Activated CD4-positive, alpha-beta T cell treated with anti-CD3 and anti-CD28 coated beads for 36 hours (primary cell): ENCODE measurements at regions of chr5 and their contacts with region 1.

Region 1: DNA sequence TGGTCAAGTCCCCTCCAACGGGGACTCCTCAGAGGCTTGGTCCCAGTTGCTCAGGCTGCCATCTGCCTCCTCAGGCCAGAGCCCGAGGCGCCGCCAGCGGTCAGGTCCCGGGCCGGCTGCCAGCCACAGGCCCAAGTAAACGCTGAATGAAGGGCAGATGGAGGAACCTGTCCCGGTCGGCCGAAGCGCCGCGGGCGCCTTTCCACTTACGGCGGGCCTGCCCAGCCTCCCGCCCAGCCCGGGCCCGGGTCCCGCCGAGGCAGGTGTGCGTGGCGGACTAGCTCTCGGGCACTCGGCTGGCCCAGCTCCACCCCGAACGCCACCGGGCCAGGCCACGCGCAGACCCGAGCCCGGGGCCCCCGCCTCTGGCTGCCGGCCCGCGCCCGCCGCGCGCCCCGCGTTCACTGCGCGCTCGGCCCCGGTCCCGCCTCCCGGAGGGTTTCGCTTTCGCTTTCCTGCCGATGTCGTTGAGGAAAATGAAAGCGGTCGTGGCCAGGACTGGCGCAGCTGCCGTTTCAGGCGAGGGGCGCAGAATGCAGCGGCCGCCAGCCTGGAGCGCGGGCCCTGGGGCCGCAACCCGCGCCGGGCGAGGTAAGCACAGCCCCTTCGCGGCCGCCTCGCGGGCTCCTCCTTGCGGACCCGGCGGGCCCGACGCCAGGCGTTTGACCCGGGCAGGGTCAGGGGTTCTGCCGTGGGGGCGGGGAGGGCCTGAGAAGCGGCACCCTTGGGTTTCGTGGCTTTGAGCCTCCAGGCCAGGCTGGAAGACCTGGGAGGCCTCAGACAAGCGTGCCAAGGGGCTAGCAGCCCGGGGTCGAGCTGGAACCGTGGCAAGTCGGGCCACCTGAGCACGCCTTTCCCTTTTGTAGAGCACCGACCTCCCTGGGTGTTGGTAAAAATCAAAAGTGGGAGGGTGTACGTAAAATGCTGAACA is 41.2 kb downstream of the SLC22A5 start:
- DNase-seq: peak; percentile 92
- ATAC-seq: peak; percentile 68
- H3K4me3 Mint-ChIP-seq: peak overlapping the region; percentile 83
- H3K27ac Mint-ChIP-seq: peak overlapping the region; percentile 98
- H3K4me1 Mint-ChIP-seq: peaks cover 71% of the 10 kb centered on the region
- H3K27me3 Mint-ChIP-seq: no peaks in the 10 kb centered on the region

Region 2: GRCh38 chr5:131622633-131623032 is 788.1 kb before region 1 on chr5:
- CTCF ChIA-PET with region 1: no interaction called
- POLR2A ChIA-PET with region 1: no interaction called
- intact Hi-C with region 1: no loop called
- DNase-seq: no peak
- ATAC-seq: no peak
- H3K4me3 Mint-ChIP-seq: no peak overlapping the region
- H3K27ac Mint-ChIP-seq: no peak overlapping the region
- H3K4me1 Mint-ChIP-seq: peaks cover 73% of the 10 kb centered on the region
- H3K27me3 Mint-ChIP-seq: no peaks in the 10 kb centered on the region

Region 3: GRCh38 chr5:132396589-132397031 is 14.1 kb before region 1 on chr5:
- CTCF ChIA-PET with region 1: interaction called, 6 read pairs
- POLR2A ChIA-PET with region 1: no interaction called
- intact Hi-C with region 1: loop called in 1 of 2 experiments (anchors 1 kb)
- DNase-seq: no peak
- ATAC-seq: peak; percentile 61
- H3K4me3 Mint-ChIP-seq: no peak overlapping the region
- H3K27ac Mint-ChIP-seq: no peak overlapping the region
- H3K4me1 Mint-ChIP-seq: peaks cover 71% of the 10 kb centered on the region
- H3K27me3 Mint-ChIP-seq: no peaks in the 10 kb centered on the region

Region 4: GRCh38 chr5:132479111-132479951 is 68.6 kb after region 1 on chr5:
- CTCF ChIA-PET with region 1: interaction called, 13 read pairs
- POLR2A ChIA-PET with region 1: interaction called, 38 read pairs
- intact Hi-C with region 1: no loop called
- DNase-seq: no peak
- ATAC-seq: peak; percentile 31
- H3K4me3 Mint-ChIP-seq: no peak overlapping the region
- H3K27ac Mint-ChIP-seq: peak overlapping the region; percentile 65
- H3K4me1 Mint-ChIP-seq: peaks cover 53% of the 10 kb centered on the region
- H3K27me3 Mint-ChIP-seq: no peaks in the 10 kb centered on the region

Region 5: DNA sequence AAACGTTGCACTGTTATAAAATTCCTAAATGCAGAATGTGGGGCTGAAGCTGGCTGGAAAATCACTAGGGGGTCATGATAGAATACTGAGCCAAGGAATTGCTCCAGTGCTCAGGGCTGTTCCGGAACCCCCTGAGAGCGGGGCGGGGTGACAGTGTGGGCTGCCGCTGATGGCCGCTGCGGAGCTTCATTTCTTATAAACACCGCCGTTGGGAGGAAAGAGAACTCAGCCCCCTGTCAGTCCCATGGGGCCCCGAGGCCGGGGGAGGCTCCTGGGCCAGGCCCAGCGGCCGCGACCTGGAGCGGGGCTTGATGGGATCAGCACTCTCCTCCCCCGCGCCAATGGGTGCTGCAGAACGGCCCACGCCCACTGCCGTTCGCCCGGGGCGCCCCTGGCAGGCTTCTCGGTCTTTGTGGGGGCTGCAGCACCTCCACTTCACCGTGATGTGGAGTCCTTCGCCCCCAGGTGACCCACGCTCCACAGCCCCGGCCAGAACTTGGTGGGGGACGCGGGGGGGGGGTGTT is 85.0 kb after region 1 on chr5:
- CTCF ChIA-PET with region 1: interaction called, 21 read pairs
- POLR2A ChIA-PET with region 1: interaction called, 18 read pairs
- intact Hi-C with region 1: loop called (anchors 1 to 2 kb)
- DNase-seq: peak; percentile 92
- ATAC-seq: peak; percentile 49
- H3K4me3 Mint-ChIP-seq: peak overlapping the region; percentile 87
- H3K27ac Mint-ChIP-seq: peak overlapping the region; percentile 95
- H3K4me1 Mint-ChIP-seq: peaks cover 61% of the 10 kb centered on the region
- H3K27me3 Mint-ChIP-seq: no peaks in the 10 kb centered on the region